HepG2 (cell line): ENCODE measurements at regions of chr9 and their contacts with region 1.

Region 1: GRCh38 chr9:33290247-33291030 is at the start of gene NFX1:
- DNase-seq: peak; percentile 94
- ATAC-seq: peak; percentile 95
- H3K4me3 ChIP-seq: peak within 1 kb of the TSS; percentile 75 to 89 (median 84)
- H3K27ac ChIP-seq: peak within 1 kb of the TSS; percentile 85
- H3K4me1 ChIP-seq: peaks cover 63% of the 10 kb centered on the region
- H3K27me3 ChIP-seq: no peaks in the 10 kb centered on the region
- CTCF ChIP-seq: no peak
- EP300 ChIP-seq: peak; percentile 43 to 48; a peak in 2 of 4 replicates
- POLR2A ChIP-seq: peak; percentile 87 to 89
- RAD21 ChIP-seq: peak; percentile 38; the same call in 1 of the 2 replicates
- total RNA-seq, gene NFX1: 27.5 and 29.6 TPM in 2 replicates

Region 2: GRCh38 chr9:33167046-33167808 is 123.2 kb before region 1 on chr9 and contains the start of gene B4GALT1:
- CTCF ChIA-PET with region 1: no interaction called
- POLR2A ChIA-PET with region 1: interaction called, 5 read pairs
- in situ Hi-C with region 1: no loop called
- intact Hi-C with region 1: loop called (anchors 1 kb)
- DNase-seq: peak; percentile 64
- ATAC-seq: peak; percentile 57
- H3K4me3 ChIP-seq: peak within 1 kb of the TSS; percentile 78 to 95 (median 85)
- H3K27ac ChIP-seq: peak within 1 kb of the TSS; percentile 80
- H3K4me1 ChIP-seq: peaks cover 72% of the 10 kb centered on the region
- H3K27me3 ChIP-seq: no peaks in the 10 kb centered on the region; a peak in 1 of 5 replicates
- CTCF ChIP-seq: peak; percentile 34
- EP300 ChIP-seq: 0 out of 4 replicates have a peak, but pooled peaks of 1 of the 2 experiments have one; percentile 13
- POLR2A ChIP-seq: peak; percentile 42 to 72; a peak in 3 of 4 replicates
- RAD21 ChIP-seq: no peak; the same call in 1 of the 2 replicates
- total RNA-seq, gene B4GALT1: 15.7 TPM in 2 replicates

Region 3: GRCh38 chr9:33177639-33178038 is 112.8 kb before region 1 on chr9:
- CTCF ChIA-PET with region 1: no interaction called
- POLR2A ChIA-PET with region 1: no interaction called
- in situ Hi-C with region 1: no loop called
- intact Hi-C with region 1: no loop called
- DNase-seq: no peak
- ATAC-seq: no peak
- H3K4me3 ChIP-seq: no peak overlapping the region
- H3K27ac ChIP-seq: no peak overlapping the region
- H3K4me1 ChIP-seq: peaks cover 16% of the 10 kb centered on the region
- H3K27me3 ChIP-seq: no peaks in the 10 kb centered on the region; a peak in 1 of 5 replicates
- CTCF ChIP-seq: no peak
- EP300 ChIP-seq: no peak
- POLR2A ChIP-seq: no peak
- RAD21 ChIP-seq: no peak

Region 4: GRCh38 chr9:33264473-33265177 is 25.8 kb before region 1 on chr9 and contains the starts of genes BAG1 and CHMP5:
- CTCF ChIA-PET with region 1: no interaction called
- POLR2A ChIA-PET with region 1: interaction called, 14 read pairs
- in situ Hi-C with region 1: no loop called
- intact Hi-C with region 1: no loop called
- DNase-seq: peak; percentile 98
- ATAC-seq: peak; percentile 94
- H3K4me3 ChIP-seq: peak within 1 kb of the TSS; percentile 89 to 100 (median 98)
- H3K27ac ChIP-seq: peak within 1 kb of the TSS; percentile 82
- H3K4me1 ChIP-seq: peaks cover 30% of the 10 kb centered on the region
- H3K27me3 ChIP-seq: no peaks in the 10 kb centered on the region; a peak in 1 of 5 replicates
- CTCF ChIP-seq: peak; percentile 48
- EP300 ChIP-seq: no peak
- POLR2A ChIP-seq: peak; percentile 69 to 70
- RAD21 ChIP-seq: no peak; the same call in 1 of the 2 replicates
- total RNA-seq, gene BAG1: 52.8 and 59.5 TPM in 2 replicates
- total RNA-seq, gene CHMP5: 57.3 and 91.4 TPM in 2 replicates

Region 5: GRCh38 chr9:33300546-33300945 is 10.1 kb after region 1 on chr9:
- CTCF ChIA-PET with region 1: no interaction called
- POLR2A ChIA-PET with region 1: interaction called, 22 read pairs
- in situ Hi-C with region 1: no loop called
- intact Hi-C with region 1: no loop called
- DNase-seq: peak; percentile 38
- ATAC-seq: peak; percentile 85
- H3K4me3 ChIP-seq: no peak overlapping the region
- H3K27ac ChIP-seq: peak overlapping the region; percentile 43
- H3K4me1 ChIP-seq: peaks cover 55% of the 10 kb centered on the region
- H3K27me3 ChIP-seq: no peaks in the 10 kb centered on the region
- CTCF ChIP-seq: no peak
- EP300 ChIP-seq: no peak
- POLR2A ChIP-seq: no peak
- RAD21 ChIP-seq: no peak

Region 6: DNA sequence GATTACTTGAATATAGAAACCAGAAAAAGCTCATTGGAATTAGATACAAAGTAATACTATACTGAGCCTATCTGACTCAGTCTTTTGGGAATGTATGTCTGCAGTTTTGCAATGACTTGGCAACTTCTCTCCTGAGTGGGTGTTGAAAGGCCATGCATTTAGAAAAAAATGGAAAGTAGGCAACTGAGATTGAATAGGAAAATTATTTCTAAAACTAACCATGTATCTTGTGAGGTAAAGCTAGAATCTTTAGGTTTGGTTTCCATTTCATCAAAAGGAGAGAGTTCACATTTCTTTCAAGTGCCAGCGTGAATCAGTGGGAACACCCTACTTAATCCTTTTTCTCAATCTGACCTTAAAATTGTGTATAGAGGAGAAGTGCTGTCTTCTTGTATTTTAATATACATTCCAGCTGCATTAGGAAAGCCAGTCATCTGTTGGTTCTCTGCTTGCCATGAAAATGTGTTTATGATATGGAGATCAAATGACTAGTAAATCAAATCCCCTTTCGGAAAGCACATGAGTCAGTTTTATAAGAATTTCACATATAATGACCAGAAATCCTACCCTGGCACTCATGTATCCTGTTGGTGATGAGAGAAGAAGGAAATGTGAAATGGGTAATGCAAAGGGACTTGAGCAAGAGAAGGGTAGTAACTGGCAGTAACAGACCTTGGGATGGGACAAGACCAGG is 30.3 kb after region 1 on chr9:
- CTCF ChIA-PET with region 1: interaction called, 3 read pairs
- POLR2A ChIA-PET with region 1: interaction called, 9 read pairs
- in situ Hi-C with region 1: no loop called
- intact Hi-C with region 1: loop called (anchors 5 kb)
- DNase-seq: no peak
- ATAC-seq: no peak
- H3K4me3 ChIP-seq: no peak overlapping the region
- H3K27ac ChIP-seq: no peak overlapping the region
- H3K4me1 ChIP-seq: no peaks in the 10 kb centered on the region
- H3K27me3 ChIP-seq: no peaks in the 10 kb centered on the region
- CTCF ChIP-seq: no peak
- EP300 ChIP-seq: no peak
- POLR2A ChIP-seq: no peak
- RAD21 ChIP-seq: no peak

Region 7: GRCh38 chr9:33466565-33467495 is 176.4 kb after region 1 on chr9:
- CTCF ChIA-PET with region 1: no interaction called
- POLR2A ChIA-PET with region 1: interaction called, 5 read pairs
- in situ Hi-C with region 1: loop called (anchors 10 kb)
- intact Hi-C with region 1: loop called (anchors 2 kb)
- DNase-seq: peak; percentile 19
- ATAC-seq: peak; percentile 88
- H3K4me3 ChIP-seq: no peak overlapping the region
- H3K27ac ChIP-seq: no peak overlapping the region
- H3K4me1 ChIP-seq: peaks cover 13% of the 10 kb centered on the region
- H3K27me3 ChIP-seq: no peaks in the 10 kb centered on the region
- CTCF ChIP-seq: peak; percentile 97
- EP300 ChIP-seq: no peak
- POLR2A ChIP-seq: no peak
- RAD21 ChIP-seq: peak; percentile 94

Region 8: DNA sequence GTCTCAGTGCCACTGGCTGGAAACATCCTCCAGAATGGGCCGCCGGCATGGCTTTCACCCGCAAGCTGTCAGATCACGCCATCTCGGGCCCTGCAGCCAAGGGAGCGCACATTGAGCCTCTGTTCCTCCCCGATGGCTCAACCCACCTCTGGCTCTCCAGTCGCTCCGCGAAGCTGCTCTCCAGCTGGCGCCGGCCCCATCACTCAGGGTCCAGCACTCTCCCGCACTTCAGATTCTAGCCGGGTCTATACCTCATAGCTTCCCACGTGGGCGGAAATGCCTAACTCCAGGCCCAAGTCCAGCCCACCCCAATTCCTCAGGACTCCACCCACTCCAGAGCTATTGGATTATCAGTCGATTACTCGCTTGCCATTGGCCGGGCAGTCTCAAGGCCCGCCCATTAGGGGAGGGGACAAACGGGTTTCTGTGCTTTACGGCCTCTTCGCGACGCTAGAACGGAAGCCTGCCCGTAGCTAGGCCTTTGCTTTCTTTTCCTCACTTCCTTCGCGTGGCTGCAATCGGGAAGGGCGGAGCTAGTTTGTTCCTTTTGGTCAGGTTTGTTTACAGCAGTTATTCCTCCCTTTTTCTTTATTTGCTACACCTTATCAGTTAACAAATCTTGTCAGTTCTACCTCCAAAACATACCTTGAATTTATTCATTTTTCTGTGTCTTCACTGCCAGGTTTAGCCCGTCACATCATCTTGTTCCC is 183.4 kb after region 1 on chr9 and contains the start of gene NOL6:
- CTCF ChIA-PET with region 1: no interaction called
- POLR2A ChIA-PET with region 1: interaction called, 9 read pairs
- in situ Hi-C with region 1: loop called (anchors 10 kb)
- intact Hi-C with region 1: loop called (anchors 2 kb)
- DNase-seq: peak; percentile 98
- ATAC-seq: peak; percentile 100
- H3K4me3 ChIP-seq: peak within 1 kb of the TSS; percentile 86 to 96 (median 93)
- H3K27ac ChIP-seq: peak within 1 kb of the TSS; percentile 55
- H3K4me1 ChIP-seq: peaks cover 17% of the 10 kb centered on the region
- H3K27me3 ChIP-seq: no peaks in the 10 kb centered on the region; a peak in 1 of 5 replicates
- CTCF ChIP-seq: no peak
- EP300 ChIP-seq: no peak
- POLR2A ChIP-seq: peak; percentile 74 to 85
- RAD21 ChIP-seq: no peak
- total RNA-seq, gene NOL6: 28.6 and 30.2 TPM in 2 replicates